Lower lobe of right lung (tissue), 2 donors: ENCODE measurements at regions of chr3 and their contacts with region 1.

Region 1: DNA sequence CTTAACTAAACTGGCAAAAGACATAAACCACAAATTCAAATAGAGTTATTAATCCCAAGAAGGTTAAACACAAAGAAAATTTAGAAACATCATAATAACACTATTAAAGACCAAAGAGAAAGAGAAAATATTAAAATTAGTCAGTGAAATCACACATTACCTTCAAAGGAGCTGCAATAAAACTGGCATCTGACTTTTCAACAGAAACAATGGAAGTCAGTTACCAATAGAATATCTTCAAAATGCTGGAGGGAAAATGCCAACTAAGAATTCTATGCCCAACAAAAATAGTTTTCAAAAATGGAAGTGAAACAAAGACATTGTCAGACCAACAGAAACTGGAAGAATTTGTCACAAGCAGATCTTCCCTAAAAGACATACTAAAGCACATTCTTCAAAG is 68.7 kb upstream of the RNF7 start:
- DNase-seq: no peak
- ATAC-seq: no peak
- H3K4me3 ChIP-seq: no peak overlapping the region
- H3K27ac ChIP-seq: no peak overlapping the region
- H3K4me1 ChIP-seq: no peaks in the 10 kb centered on the region
- H3K27me3 ChIP-seq: no peaks in the 10 kb centered on the region
- CTCF ChIP-seq: no peak

Region 2: GRCh38 chr3:141605883-141606282 is 63.6 kb before region 1 on chr3:
- intact Hi-C with region 1: no loop called
- DNase-seq: no peak
- ATAC-seq: no peak
- H3K4me3 ChIP-seq: no peak overlapping the region
- H3K27ac ChIP-seq: no peak overlapping the region
- H3K4me1 ChIP-seq: no peaks in the 10 kb centered on the region
- H3K27me3 ChIP-seq: no peaks in the 10 kb centered on the region
- CTCF ChIP-seq: no peak

Region 3: GRCh38 chr3:141796081-141796888 is 126.9 kb after region 1 on chr3:
- intact Hi-C with region 1: loop called (anchors 5 kb)
- DNase-seq: peak; percentile 86
- ATAC-seq: peak; percentile 80 to 85
- H3K4me3 ChIP-seq: peak overlapping the region; percentile 41
- H3K27ac ChIP-seq: peak overlapping the region; percentile 87
- H3K4me1 ChIP-seq: peaks cover 37% of the 10 kb centered on the region
- H3K27me3 ChIP-seq: no peaks in the 10 kb centered on the region
- CTCF ChIP-seq: no peak

Region 4: GRCh38 chr3:141812084-141812483 is 142.7 kb after region 1 on chr3:
- intact Hi-C with region 1: no loop called
- DNase-seq: no peak
- ATAC-seq: no peak
- H3K4me3 ChIP-seq: no peak overlapping the region
- H3K27ac ChIP-seq: no peak overlapping the region
- H3K4me1 ChIP-seq: no peaks in the 10 kb centered on the region
- H3K27me3 ChIP-seq: no peaks in the 10 kb centered on the region
- CTCF ChIP-seq: no peak